ENCODE measurements at regions of chr1 and their contacts with region 1.

Region 1: GRCh38 chr1:179954493-179955297 is at the start of gene CEP350:
- DNase-seq: peak; percentile 91
- ATAC-seq: peak; percentile 90
- H3K4me3 Mint-ChIP-seq: peak within 1 kb of the TSS; percentile 81
- H3K27ac Mint-ChIP-seq: peak within 1 kb of the TSS; percentile 90
- H3K4me1 Mint-ChIP-seq: peaks cover 57% of the 10 kb centered on the region
- H3K27me3 Mint-ChIP-seq: no peaks in the 10 kb centered on the region
- CTCF ChIP-seq: no peak
- total RNA-seq, gene CEP350: 60.8 and 63.9 TPM in 2 replicates

Region 2: DNA sequence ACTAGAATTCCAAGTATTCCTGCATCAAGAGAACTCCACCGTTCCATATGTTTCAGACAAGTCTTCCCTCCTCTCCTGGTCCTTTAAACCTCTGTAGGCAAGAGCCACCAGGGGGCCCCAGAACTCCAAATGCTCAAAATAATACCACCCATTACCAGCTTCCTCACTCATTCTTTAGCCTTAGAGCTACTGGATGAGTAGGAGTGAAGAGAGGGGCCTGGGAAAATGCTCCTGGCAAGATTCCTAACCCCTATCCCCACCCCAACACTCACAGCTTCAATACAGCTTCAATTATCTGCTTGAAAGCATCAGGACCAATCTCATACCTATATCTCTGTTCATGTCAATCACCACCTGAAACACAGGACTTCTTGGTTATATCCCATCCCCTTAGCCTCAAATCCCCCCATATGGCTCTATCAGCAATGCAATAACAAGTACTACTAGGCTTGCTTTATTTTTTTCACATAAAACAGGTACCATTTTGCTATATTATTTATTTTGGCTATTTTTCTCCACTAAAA is 86.8 kb before region 1 on chr1:
- CTCF ChIA-PET with region 1: interaction called, 7 read pairs
- POLR2A ChIA-PET with region 1: interaction called, 6 read pairs
- intact Hi-C with region 1: loop called (anchors 1 kb)
- DNase-seq: peak; percentile 34
- ATAC-seq: peak; percentile 71
- H3K4me3 Mint-ChIP-seq: no peak overlapping the region
- H3K27ac Mint-ChIP-seq: no peak overlapping the region
- H3K4me1 Mint-ChIP-seq: peaks cover 18% of the 10 kb centered on the region
- H3K27me3 Mint-ChIP-seq: no peaks in the 10 kb centered on the region
- CTCF ChIP-seq: peak; percentile 50

Region 3: DNA sequence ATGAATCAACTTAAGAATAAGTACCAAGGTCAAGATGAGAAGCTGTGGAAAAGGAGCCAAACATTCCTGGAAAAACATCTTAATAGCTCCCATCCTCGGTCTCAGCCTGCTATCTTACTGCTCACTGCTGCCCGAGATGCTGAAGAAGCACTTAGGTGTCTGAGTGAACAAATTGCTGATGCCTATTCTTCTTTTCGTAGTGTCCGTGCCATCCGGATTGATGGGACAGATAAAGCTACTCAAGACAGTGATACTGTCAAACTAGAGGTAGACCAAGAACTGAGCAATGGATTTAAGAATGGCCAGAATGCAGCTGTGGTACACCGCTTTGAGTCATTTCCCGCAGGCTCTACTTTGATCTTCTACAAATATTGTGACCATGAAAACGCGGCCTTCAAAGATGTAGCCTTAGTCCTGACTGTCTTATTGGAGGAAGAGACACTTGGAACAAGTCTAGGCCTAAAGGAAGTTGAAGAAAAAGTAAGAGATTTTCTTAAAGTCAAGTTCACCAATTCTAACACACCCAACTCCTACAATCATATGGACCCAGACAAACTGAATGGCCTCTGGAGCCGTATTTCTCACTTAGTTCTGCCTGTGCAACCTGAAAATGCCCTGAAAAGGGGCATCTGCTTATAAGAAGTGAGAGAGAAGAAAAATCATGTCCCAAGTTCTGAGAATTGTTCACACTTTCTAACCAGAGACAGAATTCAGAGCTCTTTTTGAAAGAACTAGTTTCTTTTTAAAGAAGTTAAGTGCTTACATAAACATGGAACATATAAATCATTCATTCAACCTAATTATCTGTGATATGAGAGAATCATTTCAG is 36.9 kb before region 1 on chr1:
- CTCF ChIA-PET with region 1: no interaction called
- POLR2A ChIA-PET with region 1: no interaction called
- intact Hi-C with region 1: loop called (anchors 5 kb)
- DNase-seq: no peak
- ATAC-seq: no peak
- H3K4me3 Mint-ChIP-seq: no peak overlapping the region
- H3K27ac Mint-ChIP-seq: no peak overlapping the region
- H3K4me1 Mint-ChIP-seq: no peaks in the 10 kb centered on the region
- H3K27me3 Mint-ChIP-seq: no peaks in the 10 kb centered on the region
- CTCF ChIP-seq: no peak

Region 4: GRCh38 chr1:180043785-180044184 is 89.1 kb after region 1 on chr1:
- CTCF ChIA-PET with region 1: no interaction called
- POLR2A ChIA-PET with region 1: no interaction called
- intact Hi-C with region 1: no loop called
- DNase-seq: no peak
- ATAC-seq: no peak
- H3K4me3 Mint-ChIP-seq: no peak overlapping the region
- H3K27ac Mint-ChIP-seq: no peak overlapping the region
- H3K4me1 Mint-ChIP-seq: no peaks in the 10 kb centered on the region
- H3K27me3 Mint-ChIP-seq: no peaks in the 10 kb centered on the region
- CTCF ChIP-seq: no peak

Region 5: DNA sequence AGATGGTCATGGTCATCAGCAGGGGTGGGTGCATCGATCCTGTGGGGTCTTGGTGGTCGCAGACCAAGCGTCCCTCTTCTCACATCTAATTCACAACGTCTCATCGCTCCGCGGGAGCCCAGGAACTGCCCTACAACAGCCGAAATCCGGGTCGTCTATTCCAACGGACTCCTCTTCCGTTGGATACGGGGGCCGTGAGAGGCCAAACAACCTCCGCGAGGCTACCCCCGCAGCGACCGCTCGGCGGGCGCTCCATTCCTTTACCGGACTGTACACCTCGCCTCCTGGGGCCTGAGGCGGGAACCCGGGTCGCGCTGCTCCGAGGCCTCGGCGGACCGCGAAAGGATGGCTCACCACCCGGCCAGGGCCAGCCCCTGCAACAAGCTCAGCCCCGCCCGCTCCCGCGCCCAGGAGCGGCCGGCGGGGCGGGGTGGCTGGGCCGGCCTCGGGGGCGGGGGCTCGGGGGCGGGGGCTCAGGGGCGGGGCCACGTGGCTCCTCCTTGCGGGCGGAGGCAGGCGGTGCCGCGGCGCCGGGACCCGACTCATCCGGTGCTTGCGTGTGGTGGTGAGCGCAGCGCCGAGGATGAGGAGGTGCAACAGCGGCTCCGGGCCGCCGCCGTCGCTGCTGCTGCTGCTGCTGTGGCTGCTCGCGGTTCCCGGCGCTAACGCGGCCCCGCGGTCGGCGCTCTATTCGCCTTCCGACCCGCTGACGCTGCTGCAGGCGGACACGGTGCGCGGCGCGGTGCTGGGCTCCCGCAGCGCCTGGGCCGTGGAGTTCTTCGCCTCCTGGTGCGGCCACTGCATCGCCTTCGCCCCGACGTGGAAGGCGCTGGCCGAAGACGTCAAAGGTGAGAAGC is 199.9 kb after region 1 on chr1 and contains the start of gene QSOX1:
- CTCF ChIA-PET with region 1: no interaction called
- POLR2A ChIA-PET with region 1: interaction called, 4 read pairs
- intact Hi-C with region 1: loop called (anchors 1 kb)
- DNase-seq: peak; percentile 79
- ATAC-seq: peak; percentile 97
- H3K4me3 Mint-ChIP-seq: peak within 1 kb of the TSS; percentile 96
- H3K27ac Mint-ChIP-seq: peak within 1 kb of the TSS; percentile 83
- H3K4me1 Mint-ChIP-seq: peaks cover 23% of the 10 kb centered on the region
- H3K27me3 Mint-ChIP-seq: no peaks in the 10 kb centered on the region
- CTCF ChIP-seq: no peak
- total RNA-seq, gene QSOX1: 11.9 and 12.9 TPM in 2 replicates

Region 6: DNA sequence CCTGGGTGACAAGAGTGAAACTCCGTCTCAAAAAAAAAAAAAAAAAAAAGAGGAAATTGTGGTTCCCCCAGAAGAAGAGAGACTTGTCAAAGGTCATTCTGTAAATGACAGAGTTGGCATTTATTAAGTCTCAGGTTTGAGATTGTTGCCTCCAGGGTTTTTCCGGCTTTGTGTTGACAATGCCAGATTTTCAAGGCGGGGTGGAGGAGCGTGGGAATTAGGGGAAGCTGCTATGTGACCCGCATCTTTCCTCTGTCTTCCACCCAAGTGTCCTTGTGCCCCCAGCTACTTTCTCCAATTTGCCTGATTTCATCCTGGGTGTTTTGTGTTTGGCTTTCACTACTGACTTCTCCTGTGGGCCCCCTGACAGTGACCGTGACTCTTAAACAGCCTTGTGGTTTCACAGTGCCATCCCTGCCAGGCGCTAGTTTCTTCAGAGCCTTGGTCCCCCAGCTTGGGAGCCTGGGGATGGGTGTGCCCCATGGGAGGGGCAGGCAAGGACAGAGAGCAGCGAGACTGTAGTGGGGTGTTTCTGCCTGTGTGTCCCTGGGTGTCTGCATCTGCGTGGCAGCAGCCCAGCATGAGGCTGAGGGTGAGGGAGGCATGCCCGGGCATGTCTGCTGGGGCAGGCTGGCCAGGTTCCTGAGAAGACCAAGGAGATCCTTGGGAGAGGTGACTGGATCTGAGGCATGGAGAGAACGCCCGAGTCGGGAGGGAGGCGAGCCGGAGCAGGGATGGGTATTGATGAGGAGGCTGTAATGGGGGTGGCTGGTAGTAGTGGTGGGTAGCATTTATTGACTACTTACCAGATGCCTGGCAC is 1180.1 kb after region 1 on chr1:
- CTCF ChIA-PET with region 1: no interaction called
- POLR2A ChIA-PET with region 1: no interaction called
- intact Hi-C with region 1: loop called (anchors 10 kb)
- DNase-seq: peak; percentile 63
- ATAC-seq: peak; percentile 49
- H3K4me3 Mint-ChIP-seq: peak overlapping the region; percentile 84
- H3K27ac Mint-ChIP-seq: peak overlapping the region; percentile 99
- H3K4me1 Mint-ChIP-seq: peaks cover 94% of the 10 kb centered on the region
- H3K27me3 Mint-ChIP-seq: no peaks in the 10 kb centered on the region
- CTCF ChIP-seq: no peak

Measured in activated B cell treated with CpG ODN at 0.5 μM for 24 hours (primary cell).